ENCODE measurements at regions of chr6 and their contacts with region 1.

Region 1: GRCh38 chr6:89940225-89941027 is 46.2 kb downstream of the GJA10 start:
- DNase-seq: peak; percentile 75

Region 2: GRCh38 chr6:89895276-89895874 is 45.1 kb before region 1 on chr6:
- CTCF ChIA-PET with region 1: no interaction called
- POLR2A ChIA-PET with region 1: no interaction called
- DNase-seq: peak; percentile 58

Region 3: DNA sequence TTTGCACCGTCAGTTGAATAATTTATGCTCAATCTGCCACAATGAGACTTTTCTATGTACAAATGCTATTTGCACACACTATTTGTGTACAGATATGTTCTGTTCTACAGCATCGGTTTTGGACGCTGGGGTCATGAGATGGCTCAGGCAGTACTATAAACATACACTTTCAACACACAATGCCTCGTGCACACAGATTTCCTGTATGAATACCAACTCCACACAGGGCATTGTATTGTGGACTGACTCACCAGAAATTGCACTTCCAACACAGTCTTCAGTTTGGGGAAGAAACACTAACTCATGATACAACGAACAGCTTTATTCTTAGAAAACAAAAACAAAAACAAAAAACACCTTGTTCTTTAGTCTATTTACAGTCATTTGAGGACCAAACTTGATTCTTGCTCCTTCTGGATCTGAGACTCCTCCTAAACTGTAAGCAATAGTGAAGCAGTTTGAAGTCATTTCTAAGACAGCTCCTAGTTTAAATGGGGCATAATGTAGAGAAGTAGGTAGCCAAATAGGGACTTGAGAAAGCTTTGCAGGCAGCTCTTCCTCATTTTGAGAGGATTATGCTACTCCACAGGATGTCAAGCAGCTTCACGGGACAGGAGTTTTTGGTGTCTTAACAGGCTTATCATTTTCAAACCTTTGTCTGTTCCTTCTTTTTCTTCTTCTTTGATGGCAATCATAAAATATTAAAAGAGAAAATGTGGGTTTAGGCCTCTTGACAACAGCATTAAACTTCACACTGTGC is 12.5 kb before region 1 on chr6:
- CTCF ChIA-PET with region 1: interaction called, 10 read pairs
- POLR2A ChIA-PET with region 1: no interaction called
- DNase-seq: no peak

Region 4: GRCh38 chr6:89952686-89953085 is 12.3 kb after region 1 on chr6:
- CTCF ChIA-PET with region 1: interaction called, 13 read pairs
- POLR2A ChIA-PET with region 1: no interaction called
- DNase-seq: no peak

Region 5: GRCh38 chr6:90478789-90479602 is 538.6 kb after region 1 on chr6:
- CTCF ChIA-PET with region 1: interaction called, 21 read pairs
- POLR2A ChIA-PET with region 1: no interaction called
- DNase-seq: peak; percentile 92

Measured in HEK293T (cell line).